ENCODE measurements at regions of chr16 and their contacts with region 1.

Region 1: DNA sequence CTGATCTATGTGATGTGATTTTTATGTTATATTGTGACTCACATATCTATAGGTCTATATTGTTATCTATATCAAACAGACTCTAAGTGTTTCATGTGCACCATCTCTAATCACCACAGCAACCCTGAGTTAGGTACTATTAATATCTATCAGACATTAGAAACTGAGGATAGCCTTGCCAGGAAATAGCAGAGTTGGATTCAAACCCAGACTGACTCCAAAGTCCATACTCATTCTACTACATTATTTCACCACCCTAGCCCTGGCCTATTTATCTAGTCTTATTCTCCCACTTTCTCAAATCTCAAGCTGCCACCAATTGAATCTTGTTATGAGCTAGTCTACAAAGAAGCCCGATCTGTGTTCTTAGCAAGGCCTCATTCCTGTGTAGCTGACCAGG is 65.4 kb upstream of the GNAO1 start:
- DNase-seq: no peak
- ATAC-seq: no peak
- H3K4me3 Mint-ChIP-seq: no peak overlapping the region
- H3K27ac Mint-ChIP-seq: no peak overlapping the region
- H3K4me1 Mint-ChIP-seq: no peaks in the 10 kb centered on the region
- H3K27me3 Mint-ChIP-seq: peaks cover 37% of the 10 kb centered on the region

Region 2: DNA sequence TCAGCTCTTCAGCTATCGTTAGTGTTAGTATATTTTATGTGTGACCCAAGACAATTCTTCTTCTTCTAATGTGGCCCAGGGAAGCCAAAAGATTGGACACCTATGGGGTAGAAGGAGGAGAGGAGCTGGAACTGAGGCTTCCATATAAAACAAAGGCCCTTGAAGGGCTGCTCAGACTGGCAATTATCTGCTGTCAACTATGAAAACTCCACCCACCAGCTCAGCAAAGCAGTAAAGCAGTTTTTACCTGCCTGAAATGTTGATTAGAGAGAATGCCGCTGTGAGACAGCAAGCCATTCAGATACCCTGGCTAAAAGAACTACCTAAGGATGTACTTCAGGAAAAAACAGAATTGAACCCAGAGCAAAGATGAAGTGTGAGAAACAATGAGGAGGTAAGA is 19.4 kb after region 1 on chr16:
- CTCF ChIA-PET with region 1: no interaction called
- POLR2A ChIA-PET with region 1: no interaction called
- intact Hi-C with region 1: loop called in 1 of 2 experiments (anchors 2 kb)
- DNase-seq: no peak
- ATAC-seq: no peak
- H3K4me3 Mint-ChIP-seq: no peak overlapping the region
- H3K27ac Mint-ChIP-seq: no peak overlapping the region
- H3K4me1 Mint-ChIP-seq: no peaks in the 10 kb centered on the region
- H3K27me3 Mint-ChIP-seq: peaks cover 13% of the 10 kb centered on the region

Region 3: DNA sequence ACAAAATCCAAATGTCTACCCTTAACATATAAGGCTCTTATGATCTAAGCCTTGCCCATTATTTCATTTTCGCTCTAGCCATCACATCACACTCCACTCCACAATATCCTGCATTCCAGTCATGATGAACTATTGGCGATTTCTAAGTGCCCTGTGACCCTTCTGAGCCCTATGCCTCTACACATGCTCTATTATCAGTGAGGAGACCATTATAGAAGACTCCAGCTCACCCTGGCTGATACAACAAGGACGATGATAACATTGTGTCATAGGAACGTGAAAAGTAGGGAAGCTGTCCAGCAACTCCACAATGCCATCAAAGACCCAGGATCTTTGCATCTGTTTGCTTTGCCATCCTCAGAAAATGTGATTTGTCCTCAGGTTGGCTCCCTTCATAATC is 35.7 kb after region 1 on chr16:
- CTCF ChIA-PET with region 1: no interaction called
- POLR2A ChIA-PET with region 1: no interaction called
- intact Hi-C with region 1: no loop called
- DNase-seq: no peak
- ATAC-seq: no peak
- H3K4me3 Mint-ChIP-seq: no peak overlapping the region
- H3K27ac Mint-ChIP-seq: no peak overlapping the region
- H3K4me1 Mint-ChIP-seq: no peaks in the 10 kb centered on the region
- H3K27me3 Mint-ChIP-seq: peaks cover 2% of the 10 kb centered on the region

Measured in activated CD4-positive, alpha-beta T cell treated with anti-CD3 and anti-CD28 coated beads for 36 hours (primary cell).